H1 (cell line): ENCODE measurements at regions of chr6 and their contacts with region 1.

Region 1: GRCh38 chr6:34610819-34611477 is 54.8 kb upstream of the SPDEF start:
- DNase-seq: no peak
- H3K4me3 ChIP-seq: no peak overlapping the region
- H3K27ac ChIP-seq: no peak overlapping the region
- H3K4me1 ChIP-seq: no peaks in the 10 kb centered on the region
- H3K27me3 ChIP-seq: no peaks in the 10 kb centered on the region
- CTCF ChIP-seq: no peak
- EP300 ChIP-seq: no peak
- POLR2A ChIP-seq: no peak
- RAD21 ChIP-seq: no peak

Region 2: GRCh38 chr6:34425498-34426410 is 185.2 kb before region 1 on chr6 and contains the start of gene RPS10:
- CTCF ChIA-PET with region 1: interaction called, 3 read pairs
- POLR2A ChIA-PET with region 1: interaction called, 14 read pairs
- DNase-seq: peak; percentile 75 to 97
- H3K4me3 ChIP-seq: peak within 1 kb of the TSS; percentile 91 to 99 (median 95)
- H3K27ac ChIP-seq: peak within 1 kb of the TSS; percentile 92
- H3K4me1 ChIP-seq: peaks cover 0 to 11% (median 4%) of the 10 kb centered on the region in 4 experiments; a peak in 5 of 7 replicates
- H3K27me3 ChIP-seq: no peaks in the 10 kb centered on the region
- CTCF ChIP-seq: no peak
- EP300 ChIP-seq: no peak
- POLR2A ChIP-seq: peak; percentile 93 to 96
- RAD21 ChIP-seq: 0 out of 4 replicates have a peak, but pooled peaks have one; percentile 3 to 16
- total RNA-seq, gene RPS10: 2,408 and 2,434 TPM in 2 replicates

Region 3: GRCh38 chr6:34514593-34515472 is 96.1 kb before region 1 on chr6:
- CTCF ChIA-PET with region 1: interaction called, 23 read pairs
- POLR2A ChIA-PET with region 1: no interaction called
- DNase-seq: peak in 1 of 2 experiments; percentile 74
- H3K4me3 ChIP-seq: peak overlapping the region; percentile 24 to 70 (median 64)
- H3K27ac ChIP-seq: no peak overlapping the region
- H3K4me1 ChIP-seq: peaks cover 0 to 17% (median 9%) of the 10 kb centered on the region in 4 experiments; a peak in 5 of 7 replicates
- H3K27me3 ChIP-seq: peaks cover 0 to 6% (median 1%) of the 10 kb centered on the region in 4 experiments; a peak in 2 of 7 replicates
- CTCF ChIP-seq: no peak
- EP300 ChIP-seq: no peak
- POLR2A ChIP-seq: no peak
- RAD21 ChIP-seq: no peak

Region 4: GRCh38 chr6:34560366-34561226 is 50.4 kb before region 1 on chr6:
- CTCF ChIA-PET with region 1: interaction called, 35 read pairs
- POLR2A ChIA-PET with region 1: no interaction called
- DNase-seq: no peak
- H3K4me3 ChIP-seq: no peak overlapping the region
- H3K27ac ChIP-seq: no peak overlapping the region
- H3K4me1 ChIP-seq: peaks cover 0 to 6% (median 4%) of the 10 kb centered on the region in 4 experiments; a peak in 4 of 7 replicates
- H3K27me3 ChIP-seq: no peaks in the 10 kb centered on the region
- CTCF ChIP-seq: no peak
- EP300 ChIP-seq: no peak
- POLR2A ChIP-seq: no peak
- RAD21 ChIP-seq: peak in 1 of 2 experiments; percentile 21; a peak in 2 of 4 replicates

Region 5: DNA sequence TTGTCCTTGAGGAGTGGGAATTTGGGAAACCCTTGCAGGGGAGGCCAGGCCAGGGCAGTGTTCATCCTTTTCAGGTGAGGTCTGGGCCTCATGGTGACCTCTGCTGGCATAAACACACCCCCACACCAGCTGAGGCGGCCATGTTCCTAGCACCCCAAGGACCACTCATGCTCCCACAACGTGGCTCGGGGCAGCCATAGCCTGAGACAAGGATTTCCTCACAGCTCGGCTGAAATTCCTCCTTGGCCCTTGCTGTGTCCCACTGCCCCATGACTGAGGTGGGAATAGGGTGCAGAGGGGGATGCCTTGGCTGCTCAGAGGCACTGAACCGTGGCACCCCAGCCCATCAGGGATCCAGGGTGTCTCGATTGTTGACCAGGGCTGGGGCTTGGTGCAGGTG is 27.5 kb before region 1 on chr6:
- CTCF ChIA-PET with region 1: interaction called, 14 read pairs
- POLR2A ChIA-PET with region 1: interaction called, 4 read pairs
- DNase-seq: no peak
- H3K4me3 ChIP-seq: no peak overlapping the region
- H3K27ac ChIP-seq: no peak overlapping the region
- H3K4me1 ChIP-seq: peaks cover 2 to 20% (median 11%) of the 10 kb centered on the region in 4 experiments; a peak in 6 of 7 replicates
- H3K27me3 ChIP-seq: no peaks in the 10 kb centered on the region
- CTCF ChIP-seq: peak; percentile 36 to 68 (median 61); a peak in 3 of 4 replicates
- EP300 ChIP-seq: no peak
- POLR2A ChIP-seq: no peak
- RAD21 ChIP-seq: peak; percentile 45 to 59

Region 6: GRCh38 chr6:34729631-34730470 is 118.9 kb after region 1 on chr6:
- CTCF ChIA-PET with region 1: no interaction called
- POLR2A ChIA-PET with region 1: no interaction called
- DNase-seq: no peak
- H3K4me3 ChIP-seq: no peak overlapping the region
- H3K27ac ChIP-seq: no peak overlapping the region
- H3K4me1 ChIP-seq: no peaks in the 10 kb centered on the region
- H3K27me3 ChIP-seq: no peaks in the 10 kb centered on the region
- CTCF ChIP-seq: no peak
- EP300 ChIP-seq: no peak
- POLR2A ChIP-seq: no peak
- RAD21 ChIP-seq: no peak